Natural killer cell (primary cell): ENCODE measurements at regions of chrX and their contacts with region 1.

Region 1: GRCh38 chrX:1521459-1521956 is 15.5 kb downstream of the P2RY8 start:
- DNase-seq: peak; percentile 32 to 90
- ATAC-seq: peak; percentile 89 to 92 (median 91)
- H3K4me3 ChIP-seq: no peak overlapping the region
- H3K4me3 Mint-ChIP-seq: peak overlapping the region; percentile 53
- H3K27ac ChIP-seq: peak overlapping the region; percentile 82
- H3K27ac Mint-ChIP-seq: peak overlapping the region; percentile 78 to 91
- H3K4me1 ChIP-seq: peaks cover 38% of the 10 kb centered on the region
- H3K4me1 Mint-ChIP-seq: peaks cover 44 to 52% of the 10 kb centered on the region in 2 donors
- H3K27me3 ChIP-seq: no peaks in the 10 kb centered on the region
- H3K27me3 Mint-ChIP-seq: no peaks in the 10 kb centered on the region
- CTCF ChIP-seq: no peak

Region 2: DNA sequence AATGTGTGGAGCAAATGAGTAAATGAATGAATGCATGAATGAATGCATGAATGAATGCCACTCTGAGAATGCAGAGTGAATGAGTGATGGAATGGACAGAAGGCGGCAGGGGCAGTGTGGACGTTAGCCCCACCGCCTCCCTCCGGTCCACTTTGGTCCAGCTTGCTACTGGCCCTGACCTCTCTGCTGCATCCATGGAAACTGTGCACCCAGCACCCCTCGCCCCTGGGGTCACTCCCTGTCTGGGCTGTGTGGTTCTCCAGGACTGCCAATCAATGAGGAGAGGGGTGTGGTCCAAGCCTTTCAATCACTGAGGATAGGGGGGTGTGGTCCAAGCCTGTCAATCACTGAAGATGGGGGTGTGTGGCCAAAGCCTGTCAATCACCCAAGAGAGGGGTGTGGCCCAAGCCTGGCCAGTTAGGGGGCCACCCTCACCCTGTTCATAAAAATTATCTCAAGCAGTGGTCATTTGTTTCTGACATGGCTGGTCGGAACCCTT is 29.6 kb before region 1 on chrX:
- intact Hi-C with region 1: loop called (anchors 1 kb)
- DNase-seq: peak in 1 of 2 donors; percentile 71
- ATAC-seq: peak; percentile 83 to 85 (median 84)
- H3K4me3 ChIP-seq: no peak overlapping the region
- H3K4me3 Mint-ChIP-seq: no peak overlapping the region
- H3K27ac ChIP-seq: no peak overlapping the region
- H3K27ac Mint-ChIP-seq: peak overlapping the region; percentile 65 to 78
- H3K4me1 ChIP-seq: peaks cover 31% of the 10 kb centered on the region
- H3K4me1 Mint-ChIP-seq: peaks cover 45 to 61% of the 10 kb centered on the region in 2 donors
- H3K27me3 ChIP-seq: no peaks in the 10 kb centered on the region
- H3K27me3 Mint-ChIP-seq: no peaks in the 10 kb centered on the region
- CTCF ChIP-seq: no peak

Region 3: DNA sequence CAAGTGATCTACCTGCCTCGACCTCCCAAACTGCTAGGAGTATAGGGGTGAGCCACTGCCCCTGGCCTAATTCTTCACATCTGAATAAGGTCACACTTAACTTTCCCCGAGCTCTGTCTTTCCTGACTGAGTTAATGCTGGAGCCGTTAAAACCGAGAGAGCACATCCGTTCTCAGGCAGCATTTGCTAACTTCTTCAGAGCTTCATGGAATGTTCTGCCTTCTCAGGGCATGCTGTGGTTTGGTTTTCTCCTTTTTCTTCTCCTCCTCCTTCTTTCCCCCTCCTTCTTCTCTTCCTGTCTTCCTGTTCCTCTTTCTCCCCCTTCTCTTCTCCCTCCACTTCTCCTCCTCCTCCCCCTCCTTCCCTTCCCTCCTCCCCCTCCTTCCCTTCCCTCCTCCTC is 213.3 kb after region 1 on chrX:
- intact Hi-C with region 1: no loop called
- DNase-seq: no peak
- ATAC-seq: no peak
- H3K4me3 ChIP-seq: no peak overlapping the region
- H3K4me3 Mint-ChIP-seq: no peak overlapping the region
- H3K27ac ChIP-seq: no peak overlapping the region
- H3K27ac Mint-ChIP-seq: peak overlapping the region; percentile 16 to 68
- H3K4me1 ChIP-seq: no peaks in the 10 kb centered on the region
- H3K4me1 Mint-ChIP-seq: no peaks in the 10 kb centered on the region
- H3K27me3 ChIP-seq: no peaks in the 10 kb centered on the region
- H3K27me3 Mint-ChIP-seq: no peaks in the 10 kb centered on the region
- CTCF ChIP-seq: no peak